OCI-LY7 (cell line): ENCODE measurements at regions of chr9 and their contacts with region 1.

Region 1: GRCh38 chr9:89549031-89549644 is 51.2 kb upstream of the SEMA4D start:
- DNase-seq: peak; percentile 85
- H3K4me3 ChIP-seq: no peak overlapping the region
- H3K27ac ChIP-seq: no peak overlapping the region
- H3K4me1 ChIP-seq: peaks cover 32% of the 10 kb centered on the region
- CTCF ChIP-seq: peak; percentile 99

Region 2: DNA sequence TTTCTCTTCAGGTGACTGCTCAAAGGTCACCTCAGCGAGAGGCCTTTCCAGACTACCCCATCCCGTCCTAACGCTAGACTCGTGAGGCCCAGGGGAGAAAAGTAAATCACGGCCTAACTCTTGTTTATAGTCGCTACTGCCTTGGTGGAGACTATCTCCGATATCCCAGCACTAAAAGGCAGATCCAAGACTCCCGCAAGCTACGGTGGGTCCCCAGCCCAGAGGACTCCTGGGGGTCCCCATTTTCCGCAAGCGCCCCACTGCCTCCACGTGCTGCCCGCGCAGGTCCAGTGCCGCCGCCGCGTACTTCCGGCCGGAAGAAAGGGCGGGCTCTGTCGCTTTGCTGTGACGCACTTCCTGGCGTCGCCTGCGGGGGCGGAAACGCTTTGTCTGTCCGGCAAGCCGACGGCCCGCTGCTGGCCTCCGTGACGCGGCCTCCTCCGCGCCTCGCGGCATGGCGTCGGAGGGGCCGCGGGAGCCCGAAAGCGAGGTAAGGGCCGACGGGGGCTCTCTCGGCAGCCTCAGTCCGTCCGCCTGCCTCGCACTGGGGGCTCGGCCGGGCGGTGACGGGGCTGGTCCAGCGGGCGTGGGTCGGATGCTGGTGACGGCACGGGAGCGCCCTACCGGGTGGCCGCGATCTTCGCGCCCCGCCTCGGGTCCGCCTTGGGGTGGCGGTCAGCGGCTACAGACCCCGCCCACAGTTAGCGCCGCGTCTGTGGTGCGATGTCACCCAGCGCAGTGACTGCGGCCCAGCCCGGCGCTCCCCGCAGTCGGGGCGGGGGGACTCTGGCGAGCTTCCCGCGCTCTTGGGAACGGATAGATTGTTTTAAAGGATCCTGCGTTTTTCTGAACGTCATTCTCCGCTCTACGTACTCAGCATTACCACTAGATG is 230.8 kb before region 1 on chr9 and contains the start of gene SECISBP2:
- CTCF ChIA-PET with region 1: no interaction called
- POLR2A ChIA-PET with region 1: no interaction called
- intact Hi-C with region 1: loop called (anchors 1 kb)
- DNase-seq: peak; percentile 95
- H3K4me3 ChIP-seq: peak within 1 kb of the TSS; percentile 77
- H3K27ac ChIP-seq: peak within 1 kb of the TSS; percentile 88
- H3K4me1 ChIP-seq: peaks cover 63% of the 10 kb centered on the region
- CTCF ChIP-seq: no peak
- total RNA-seq, gene SECISBP2: 76.1 and 77.6 TPM in 2 replicates